Ovary (tissue), 10 donors: ENCODE measurements at regions of chr10 and their contacts with region 1.

Region 1: GRCh38 chr10:72229261-72230251 is 13.5 kb upstream of the ASCC1 start:
- DNase-seq: peak in 2 of 5 donors; percentile 35 to 39
- H3K4me3 ChIP-seq: no peak overlapping the region
- H3K27ac ChIP-seq: peak overlapping the region; percentile 52 to 86
- H3K4me1 ChIP-seq: peaks cover 11% of the 10 kb centered on the region
- H3K27me3 ChIP-seq: no peaks in the 10 kb centered on the region
- CTCF ChIP-seq: no peak
- EP300 ChIP-seq: peak; percentile 71
- POLR2A ChIP-seq: no peak

Region 2: GRCh38 chr10:71725998-71726579 is 503.5 kb before region 1 on chr10:
- intact Hi-C with region 1: no loop called
- DNase-seq: no peak
- H3K4me3 ChIP-seq: no peak overlapping the region
- H3K27ac ChIP-seq: peak overlapping the region in 1 of 2 donors; percentile 85
- H3K4me1 ChIP-seq: peaks cover 19% of the 10 kb centered on the region
- H3K27me3 ChIP-seq: no peaks in the 10 kb centered on the region
- CTCF ChIP-seq: no peak
- EP300 ChIP-seq: no peak
- POLR2A ChIP-seq: no peak

Region 3: DNA sequence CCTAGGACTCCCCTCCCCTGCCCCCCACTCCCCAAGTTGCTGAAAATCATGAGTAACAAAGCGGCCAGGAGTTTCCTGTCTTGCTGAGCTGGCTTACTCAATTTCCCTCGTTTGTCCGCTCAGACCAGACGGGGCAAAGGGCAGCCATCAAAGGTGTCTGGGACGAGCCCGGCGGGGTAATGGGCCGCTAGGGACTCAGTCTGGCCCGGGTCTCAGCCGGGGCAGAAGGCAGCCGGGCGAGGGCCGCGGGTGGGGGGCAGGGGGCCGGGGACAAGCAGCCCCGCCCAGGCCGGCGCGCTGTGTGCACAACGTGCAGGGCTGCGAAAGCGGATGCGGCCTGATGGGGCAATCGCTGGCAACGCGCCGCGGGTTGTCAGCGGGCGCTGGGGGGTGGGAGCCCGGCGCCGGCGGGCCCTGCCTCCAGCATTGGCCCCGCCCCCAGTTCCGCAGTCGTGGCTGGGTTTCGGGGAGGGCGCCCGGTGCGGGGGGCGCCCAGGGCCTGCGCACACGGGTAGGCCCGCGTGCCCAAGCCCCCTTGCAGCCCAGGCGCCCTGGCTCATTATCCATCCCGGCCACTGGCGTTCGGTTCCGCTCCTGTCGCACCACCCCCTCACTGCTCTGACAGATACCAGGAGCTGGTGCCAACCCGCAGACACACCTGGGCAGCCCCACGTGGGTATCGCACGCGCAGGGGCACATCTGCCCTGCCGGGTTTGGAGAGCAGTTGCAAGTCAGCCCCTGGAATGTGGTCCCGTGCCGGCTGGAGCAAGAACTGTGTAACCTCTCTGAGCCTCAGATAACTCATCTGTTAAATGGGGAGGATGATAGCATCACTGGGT is 90.1 kb after region 1 on chr10:
- intact Hi-C with region 1: loop called in 1 of 4 experiments (anchors 10 kb)
- DNase-seq: peak; percentile 95 to 97 (median 96)
- H3K4me3 ChIP-seq: peak overlapping the region; percentile 40
- H3K27ac ChIP-seq: peak overlapping the region; percentile 71 to 88
- H3K4me1 ChIP-seq: peaks cover 38% of the 10 kb centered on the region
- H3K27me3 ChIP-seq: no peaks in the 10 kb centered on the region
- CTCF ChIP-seq: peak in 1 of 3 donors; percentile 33
- EP300 ChIP-seq: peak; percentile 68
- POLR2A ChIP-seq: peak; percentile 28